Cardiac septum (tissue), 1 donor: ENCODE measurements at regions of chr14 and their contacts with region 1.

Region 1: GRCh38 chr14:90383075-90383730 is 13.6 kb upstream of the CALM1 start:
- DNase-seq: peak; percentile 100

Region 2: GRCh38 chr14:90331497-90332435 is 51.4 kb before region 1 on chr14 and contains the start of gene NRDE2:
- intact Hi-C with region 1: loop called (anchors 5 kb)
- DNase-seq: peak; percentile 99
- total RNA-seq, gene NRDE2: 11.2 TPM

Region 3: DNA sequence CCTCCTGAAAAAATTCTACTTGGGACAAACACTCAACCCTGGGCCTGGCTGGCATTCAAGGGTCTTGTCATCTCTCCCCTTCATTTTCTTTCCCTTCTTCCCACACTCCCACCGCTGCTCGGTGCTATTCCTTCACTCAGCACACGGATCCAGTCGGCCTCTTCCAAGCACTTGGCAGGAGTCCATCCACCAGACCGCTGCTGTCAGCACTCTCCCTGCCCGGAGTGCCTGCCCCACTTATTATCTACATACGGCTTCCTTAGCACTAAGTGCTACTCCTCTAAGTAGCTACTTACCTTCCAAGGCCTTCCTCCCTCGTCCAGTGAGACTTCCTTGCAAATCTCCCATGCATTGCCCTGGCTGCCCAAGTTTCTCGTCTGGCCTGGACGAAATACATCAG is 43.5 kb after region 1 on chr14:
- intact Hi-C with region 1: no loop called
- DNase-seq: no peak